ENCODE measurements at regions of chr2 and their contacts with region 1.

Region 1: DNA sequence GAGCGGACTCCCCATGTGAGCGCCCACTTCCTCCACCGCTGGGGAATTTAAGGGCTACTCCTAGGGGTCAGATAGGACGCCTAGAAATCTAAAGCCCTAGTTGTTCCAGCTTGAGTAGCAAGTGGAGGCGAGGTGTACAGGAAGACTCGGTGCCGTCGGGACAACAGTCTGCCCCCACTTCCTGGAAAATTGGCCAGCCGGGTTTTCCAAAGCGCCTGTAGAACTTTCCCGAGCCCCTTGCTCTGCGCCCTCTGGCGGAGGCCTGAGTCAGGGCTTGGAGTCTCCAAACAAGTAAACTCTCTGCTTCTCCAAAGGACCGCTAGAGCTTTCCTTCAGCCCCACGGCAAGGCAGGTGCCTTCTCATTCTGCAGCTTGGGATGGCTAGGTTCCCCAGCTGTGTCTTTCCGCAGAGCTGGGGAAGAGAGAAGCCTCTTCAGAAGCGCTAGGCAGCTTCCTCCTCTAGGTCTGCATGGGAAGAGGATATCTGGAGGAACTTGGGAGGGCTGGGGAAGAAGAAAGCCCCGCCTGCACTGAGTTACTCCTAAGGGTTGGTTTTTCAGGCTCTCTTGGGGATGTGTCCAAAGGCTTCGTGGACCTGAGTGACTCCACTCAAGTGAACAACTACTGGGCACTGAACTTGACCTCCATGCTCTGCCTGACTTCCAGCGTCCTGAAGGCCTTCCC is 688 bp downstream of the SPR start:
- DNase-seq: peak; percentile 46
- ATAC-seq: peak; percentile 32
- H3K4me3 Mint-ChIP-seq: peak overlapping the region; percentile 79
- H3K27ac Mint-ChIP-seq: no peak overlapping the region
- H3K4me1 Mint-ChIP-seq: peaks cover 13% of the 10 kb centered on the region
- H3K27me3 Mint-ChIP-seq: peaks cover 61% of the 10 kb centered on the region
- CTCF ChIP-seq: peak; percentile 46

Region 2: DNA sequence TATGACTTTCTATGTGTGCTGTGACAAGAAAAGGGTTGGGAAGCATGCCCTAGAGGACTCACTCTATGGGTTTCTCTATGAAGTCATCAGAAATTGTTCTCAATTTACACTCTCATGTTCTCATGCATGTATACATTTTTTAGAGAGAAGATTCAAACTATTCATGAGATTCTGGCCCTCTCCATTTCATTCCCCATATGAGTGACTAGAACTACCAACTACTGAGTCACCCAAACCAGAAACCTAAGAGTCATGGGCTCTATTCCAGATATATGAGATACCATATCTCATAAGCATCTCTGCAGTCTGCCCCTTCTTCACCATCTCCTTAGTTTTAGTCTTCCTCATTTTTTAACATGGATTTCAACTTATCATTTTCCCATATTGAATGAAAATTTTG is 149.8 kb before region 1 on chr2:
- CTCF ChIA-PET with region 1: no interaction called
- POLR2A ChIA-PET with region 1: no interaction called
- intact Hi-C with region 1: no loop called
- DNase-seq: no peak
- ATAC-seq: no peak
- H3K4me3 Mint-ChIP-seq: no peak overlapping the region
- H3K27ac Mint-ChIP-seq: no peak overlapping the region
- H3K4me1 Mint-ChIP-seq: no peaks in the 10 kb centered on the region
- H3K27me3 Mint-ChIP-seq: no peaks in the 10 kb centered on the region
- CTCF ChIP-seq: no peak

Region 3: DNA sequence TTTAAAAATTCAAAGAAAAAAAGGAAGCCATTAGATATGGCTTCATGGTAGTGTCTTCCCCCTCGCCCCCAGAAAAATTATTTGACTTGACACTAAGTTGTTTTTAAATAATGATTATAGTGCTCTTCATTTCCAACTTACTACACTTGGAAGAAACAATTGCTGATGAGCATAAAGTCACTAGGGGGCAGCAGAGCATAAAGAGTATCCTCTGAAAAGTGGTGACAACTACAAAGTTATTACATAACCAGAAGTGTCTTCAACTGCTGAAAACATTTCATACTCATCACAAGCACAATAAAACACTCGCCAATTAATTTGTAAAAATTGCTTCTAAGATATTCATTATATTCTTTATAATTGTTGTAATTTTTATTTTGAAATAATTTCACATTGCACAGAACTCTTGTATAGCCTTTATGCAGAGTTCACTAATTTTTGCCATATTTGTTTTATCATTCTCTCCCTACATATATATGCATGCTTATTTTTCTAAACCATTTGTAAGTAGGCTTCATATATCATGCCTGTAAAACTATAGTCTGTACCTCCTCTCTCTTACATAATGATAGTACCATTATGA is 116.9 kb before region 1 on chr2:
- CTCF ChIA-PET with region 1: interaction called, 7 read pairs
- POLR2A ChIA-PET with region 1: no interaction called
- intact Hi-C with region 1: loop called (anchors 1 kb)
- DNase-seq: no peak
- ATAC-seq: peak; percentile 52
- H3K4me3 Mint-ChIP-seq: no peak overlapping the region
- H3K27ac Mint-ChIP-seq: no peak overlapping the region
- H3K4me1 Mint-ChIP-seq: no peaks in the 10 kb centered on the region
- H3K27me3 Mint-ChIP-seq: no peaks in the 10 kb centered on the region
- CTCF ChIP-seq: peak; percentile 98

Region 4: DNA sequence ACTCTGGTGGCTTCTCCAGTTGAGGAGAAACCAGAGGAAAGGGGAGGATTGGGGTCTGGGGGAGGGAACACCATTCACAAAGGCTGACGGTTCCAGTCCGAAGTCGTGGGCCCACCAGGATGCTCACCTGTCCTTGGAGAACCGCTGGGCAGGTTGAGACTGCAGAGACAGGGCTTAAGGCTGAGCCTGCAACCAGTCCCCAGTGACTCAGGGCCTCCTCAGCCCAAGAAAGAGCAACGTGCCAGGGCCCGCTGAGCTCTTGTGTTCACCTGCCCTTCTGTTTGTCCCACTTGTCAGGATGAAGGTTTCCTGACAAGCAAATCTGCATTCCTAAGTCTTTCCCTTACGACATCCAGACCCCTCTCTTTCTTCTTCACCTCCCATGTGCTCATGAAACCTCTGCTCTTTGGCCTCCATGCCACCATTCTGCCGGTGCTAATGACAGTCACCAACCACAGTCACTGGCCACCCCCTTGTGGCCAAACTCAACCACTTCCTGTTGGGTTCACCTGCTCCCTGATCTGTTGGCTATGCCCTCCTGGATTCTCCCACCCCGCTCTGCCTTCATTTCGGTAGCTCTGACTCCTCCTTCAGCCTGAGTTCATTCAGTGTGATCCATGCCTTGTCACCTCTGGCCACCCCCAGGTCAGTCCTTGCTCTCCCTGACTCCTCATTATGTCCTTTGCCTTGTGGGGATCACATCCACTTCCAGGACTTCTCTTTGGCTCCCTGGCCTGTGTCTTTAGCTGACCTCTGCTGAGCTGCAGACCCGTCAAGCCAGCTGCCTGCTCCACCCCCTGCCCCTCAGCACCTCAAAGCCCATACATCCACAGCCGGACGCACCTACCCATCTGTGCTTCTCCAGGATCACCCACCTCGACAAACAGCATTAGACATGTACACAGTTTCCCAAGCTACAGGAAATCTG is 47.1 kb after region 1 on chr2:
- CTCF ChIA-PET with region 1: no interaction called
- POLR2A ChIA-PET with region 1: no interaction called
- intact Hi-C with region 1: loop called (anchors 2 kb)
- DNase-seq: no peak
- ATAC-seq: no peak
- H3K4me3 Mint-ChIP-seq: no peak overlapping the region
- H3K27ac Mint-ChIP-seq: no peak overlapping the region
- H3K4me1 Mint-ChIP-seq: no peaks in the 10 kb centered on the region
- H3K27me3 Mint-ChIP-seq: peaks cover 20% of the 10 kb centered on the region
- CTCF ChIP-seq: no peak

Region 5: GRCh38 chr2:72973566-72974435 is 85.9 kb after region 1 on chr2:
- CTCF ChIA-PET with region 1: interaction called, 19 read pairs
- POLR2A ChIA-PET with region 1: no interaction called
- intact Hi-C with region 1: loop called (anchors 1 kb)
- DNase-seq: no peak
- ATAC-seq: peak; percentile 73
- H3K4me3 Mint-ChIP-seq: no peak overlapping the region
- H3K27ac Mint-ChIP-seq: no peak overlapping the region
- H3K4me1 Mint-ChIP-seq: no peaks in the 10 kb centered on the region
- H3K27me3 Mint-ChIP-seq: no peaks in the 10 kb centered on the region
- CTCF ChIP-seq: no peak

Region 6: DNA sequence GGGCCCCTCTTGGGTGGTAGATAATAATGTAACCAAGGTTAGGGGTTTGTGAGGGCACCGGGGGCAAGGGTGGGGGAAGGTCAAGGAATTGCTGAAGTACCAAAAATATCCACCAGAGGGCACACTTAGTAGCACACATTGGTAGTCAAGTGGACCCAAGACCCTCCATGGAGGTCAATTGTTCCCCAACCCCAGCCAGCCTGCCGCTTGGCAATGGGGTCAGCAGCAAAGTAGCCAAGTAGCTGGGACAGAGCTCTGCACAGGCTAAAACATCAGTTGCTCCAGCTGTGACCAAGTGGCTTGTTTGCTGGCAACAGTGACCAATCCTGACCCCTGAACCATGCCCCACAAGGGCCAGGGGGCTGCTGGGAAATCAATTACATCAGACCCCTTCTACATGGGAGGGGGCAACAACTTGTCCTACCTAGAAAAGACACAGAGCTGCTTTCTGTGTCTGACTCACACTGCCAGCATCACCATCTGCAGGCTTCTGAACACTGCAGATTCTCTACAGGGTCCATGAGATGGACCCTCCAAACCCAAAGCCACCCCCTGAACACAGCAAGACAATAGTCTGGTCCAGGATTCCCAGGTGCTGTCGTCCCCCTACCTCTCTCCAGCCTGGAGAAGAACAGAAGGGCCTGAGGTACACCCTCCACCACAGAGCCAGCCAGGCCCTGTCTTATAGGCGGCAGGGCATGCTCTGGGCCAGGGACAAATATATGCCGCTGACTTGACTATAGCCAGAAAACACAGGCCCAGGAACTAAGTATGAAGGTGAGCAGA is 105.4 kb after region 1 on chr2:
- CTCF ChIA-PET with region 1: no interaction called
- POLR2A ChIA-PET with region 1: no interaction called
- intact Hi-C with region 1: loop called (anchors 5 kb)
- DNase-seq: peak; percentile 27
- ATAC-seq: peak; percentile 71
- H3K4me3 Mint-ChIP-seq: no peak overlapping the region
- H3K27ac Mint-ChIP-seq: no peak overlapping the region
- H3K4me1 Mint-ChIP-seq: no peaks in the 10 kb centered on the region
- H3K27me3 Mint-ChIP-seq: no peaks in the 10 kb centered on the region
- CTCF ChIP-seq: peak; percentile 81

Region 7: DNA sequence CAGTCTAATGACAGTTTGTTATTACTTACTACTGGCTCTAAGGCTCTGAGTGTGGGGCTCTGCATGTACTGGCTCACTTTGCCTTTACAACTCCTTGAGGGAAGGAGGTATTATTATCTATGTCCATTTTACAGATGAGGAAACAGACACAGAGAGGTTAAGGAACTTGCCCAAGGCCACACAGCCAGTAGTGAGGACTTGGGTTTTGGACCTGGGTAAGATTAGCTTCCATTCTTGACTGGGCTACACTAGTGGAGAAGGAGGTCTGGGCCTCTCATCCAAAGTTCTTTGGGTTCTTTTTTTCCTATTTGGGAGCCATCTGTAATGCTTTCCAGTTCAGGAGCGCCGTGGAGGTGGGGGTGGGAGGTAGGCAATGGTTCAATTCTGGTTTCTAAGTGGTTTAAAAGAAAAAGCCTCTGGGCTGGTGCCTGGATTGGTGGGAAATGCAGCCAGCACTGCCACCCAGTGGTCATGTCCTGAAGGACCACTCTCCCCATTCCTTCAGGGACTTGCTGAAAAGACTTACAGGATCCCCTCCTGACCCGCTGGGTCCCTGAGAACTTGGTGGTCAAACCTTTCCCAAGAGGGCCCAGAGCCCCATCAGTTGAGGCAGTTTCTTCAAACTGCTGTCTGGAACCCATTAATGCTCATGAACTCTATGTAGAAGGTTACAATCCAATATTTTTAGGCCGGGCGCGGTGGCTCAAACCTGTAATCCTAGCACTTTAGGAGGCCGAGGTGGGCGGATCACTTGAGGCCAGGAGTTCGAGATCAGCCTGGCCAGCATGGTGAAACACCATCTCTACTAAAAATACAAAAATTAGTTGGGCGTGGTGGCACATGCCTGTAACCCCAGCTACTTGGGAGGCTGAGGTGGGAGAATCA is 275.8 kb after region 1 on chr2:
- CTCF ChIA-PET with region 1: interaction called, 10 read pairs
- POLR2A ChIA-PET with region 1: no interaction called
- intact Hi-C with region 1: loop called (anchors 1 kb)
- DNase-seq: peak; percentile 56
- ATAC-seq: peak; percentile 94
- H3K4me3 Mint-ChIP-seq: no peak overlapping the region
- H3K27ac Mint-ChIP-seq: no peak overlapping the region
- H3K4me1 Mint-ChIP-seq: no peaks in the 10 kb centered on the region
- H3K27me3 Mint-ChIP-seq: peaks cover 11% of the 10 kb centered on the region
- CTCF ChIP-seq: peak; percentile 30

Region 8: GRCh38 chr2:73293534-73294171 is 405.8 kb after region 1 on chr2 and contains the start of gene EGR4:
- CTCF ChIA-PET with region 1: no interaction called
- POLR2A ChIA-PET with region 1: no interaction called
- intact Hi-C with region 1: loop called (anchors 5 kb)
- DNase-seq: peak; percentile 68
- ATAC-seq: peak; percentile 87
- H3K4me3 Mint-ChIP-seq: peak within 1 kb of the TSS; percentile 77
- H3K27ac Mint-ChIP-seq: no peak within 1 kb of the TSS
- H3K4me1 Mint-ChIP-seq: peaks cover 28% of the 10 kb centered on the region
- H3K27me3 Mint-ChIP-seq: peaks cover 41% of the 10 kb centered on the region
- CTCF ChIP-seq: no peak
- total RNA-seq, gene EGR4: 0.20 TPM in 1 of 2 replicates, not detected in the other